ENCODE measurements at regions of chr9 and their contacts with region 1.

Region 1: DNA sequence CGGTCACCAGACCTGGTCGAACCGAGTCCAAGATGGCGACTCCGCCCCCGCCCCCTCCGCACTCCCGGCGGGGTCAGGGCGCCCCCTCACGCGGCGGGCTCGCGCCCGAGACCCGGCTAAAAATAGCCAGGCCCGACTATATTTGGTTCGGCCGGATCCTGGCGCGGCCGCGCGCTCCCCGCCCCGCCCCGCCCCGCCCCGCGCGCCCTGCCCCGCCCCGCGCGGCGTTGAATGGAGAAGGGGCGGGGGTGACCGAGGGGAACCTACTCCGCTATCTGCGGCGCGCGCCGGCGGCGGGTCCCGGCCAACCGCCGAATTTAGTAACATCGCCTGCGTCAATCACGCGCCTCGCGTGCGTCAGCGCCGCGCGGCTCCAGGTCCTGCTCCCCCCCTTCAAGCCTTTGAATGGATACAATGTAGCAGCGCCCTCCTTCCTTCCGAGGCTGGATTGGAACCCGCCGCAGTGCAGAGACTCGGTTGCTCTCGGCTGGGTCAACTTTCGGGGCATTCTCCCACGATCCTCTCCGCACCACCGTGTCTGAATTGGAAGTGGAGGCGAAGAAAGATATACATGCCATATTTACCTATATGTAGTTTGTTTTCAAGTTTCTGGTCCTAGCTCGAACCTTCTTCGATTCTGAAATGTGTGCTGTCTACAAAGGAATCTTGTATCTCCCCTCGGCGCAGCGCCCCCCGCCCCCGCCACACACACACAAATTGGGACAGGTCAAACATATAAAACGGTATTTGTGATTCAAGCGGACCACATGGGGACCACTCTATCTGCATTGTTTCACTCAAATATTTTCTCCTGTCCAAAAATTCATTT is 1.6 kb upstream of the NR4A3 start:
- DNase-seq: peak in 2 of 4 experiments; percentile 94 to 98
- ATAC-seq: peak; percentile 74
- H3K4me3 ChIP-seq: peak overlapping the region; percentile 84
- H3K27ac ChIP-seq: peak overlapping the region; percentile 96
- H3K4me1 ChIP-seq: peaks cover 12 to 42% of the 10 kb centered on the region in 2 experiments
- H3K27me3 ChIP-seq: peaks cover 21 to 30% of the 10 kb centered on the region in 2 experiments
- CTCF ChIP-seq: peak in 2 of 3 experiments; percentile 33 to 45; a peak in 4 of 6 replicates
- EP300 ChIP-seq: no peak; the same call in 1 of the 2 replicates
- POLR2A ChIP-seq: no peak; the same call in none of the 2 replicates
- RAD21 ChIP-seq: peak in 1 of 2 experiments; percentile 29; a peak in 2 of 4 replicates

Region 2: DNA sequence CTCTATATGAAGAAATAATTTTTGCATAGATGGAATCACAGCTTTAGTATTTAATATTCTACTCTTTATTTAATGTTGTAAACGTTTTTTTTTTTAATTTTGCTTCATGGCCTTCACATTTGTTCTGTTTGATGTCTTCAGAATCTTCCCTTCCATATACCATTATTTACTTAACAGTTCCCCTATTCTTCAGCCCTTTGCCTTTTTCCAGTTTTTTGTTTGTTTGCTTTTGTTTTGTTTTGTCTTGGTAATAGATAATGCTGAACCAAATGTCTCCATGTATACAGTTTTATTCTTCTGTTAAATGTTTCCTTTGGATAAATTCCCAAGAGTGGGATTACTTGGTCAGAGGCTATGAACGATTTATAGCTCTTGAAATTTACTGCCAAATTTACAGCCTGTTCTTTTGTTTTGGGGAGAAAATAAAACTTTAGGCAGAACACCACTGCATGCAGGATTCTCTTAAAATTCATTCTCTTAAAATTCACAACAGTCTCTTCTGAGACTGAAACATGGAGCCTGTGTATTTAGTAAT is 40.1 kb after region 1 on chr9:
- CTCF ChIA-PET with region 1: no interaction called
- POLR2A ChIA-PET with region 1: interaction called, 3 read pairs
- in situ Hi-C with region 1: no loop called
- intact Hi-C with region 1: loop called (anchors 5 kb)
- DNase-seq: no peak
- ATAC-seq: no peak
- H3K4me3 ChIP-seq: no peak overlapping the region
- H3K27ac ChIP-seq: no peak overlapping the region
- H3K4me1 ChIP-seq: no peaks in the 10 kb centered on the region; a peak in 1 of 5 replicates
- H3K27me3 ChIP-seq: peaks cover 5 to 7% of the 10 kb centered on the region in 2 experiments; a peak in 3 of 5 replicates
- CTCF ChIP-seq: no peak
- EP300 ChIP-seq: no peak
- POLR2A ChIP-seq: no peak
- RAD21 ChIP-seq: no peak

Region 3: GRCh38 chr9:99980598-99980997 is 160.5 kb after region 1 on chr9:
- CTCF ChIA-PET with region 1: no interaction called
- POLR2A ChIA-PET with region 1: no interaction called
- in situ Hi-C with region 1: no loop called
- intact Hi-C with region 1: loop called (anchors 10 kb)
- DNase-seq: no peak
- ATAC-seq: peak; percentile 56
- H3K4me3 ChIP-seq: no peak overlapping the region
- H3K27ac ChIP-seq: no peak overlapping the region
- H3K4me1 ChIP-seq: peaks cover 0 to 8% of the 10 kb centered on the region in 2 experiments; a peak in 1 of 5 replicates
- H3K27me3 ChIP-seq: no peaks in the 10 kb centered on the region
- CTCF ChIP-seq: no peak
- EP300 ChIP-seq: no peak
- POLR2A ChIP-seq: no peak
- RAD21 ChIP-seq: no peak

Region 4: GRCh38 chr9:100098887-100099721 is 279.0 kb after region 1 on chr9 and contains the starts of genes ERP44 and INVS:
- CTCF ChIA-PET with region 1: no interaction called
- POLR2A ChIA-PET with region 1: no interaction called
- in situ Hi-C with region 1: no loop called
- intact Hi-C with region 1: loop called (anchors 10 kb)
- DNase-seq: peak; percentile 85 to 99 (median 90)
- ATAC-seq: peak; percentile 96
- H3K4me3 ChIP-seq: peak within 1 kb of the TSS; percentile 83
- H3K27ac ChIP-seq: peak within 1 kb of the TSS; percentile 84
- H3K4me1 ChIP-seq: peaks cover 4 to 17% of the 10 kb centered on the region in 2 experiments; a peak in 2 of 5 replicates
- H3K27me3 ChIP-seq: no peaks in the 10 kb centered on the region
- CTCF ChIP-seq: no peak; a peak in 1 of 6 replicates
- EP300 ChIP-seq: no peak
- POLR2A ChIP-seq: peak; percentile 87
- RAD21 ChIP-seq: no peak
- polyA plus RNA-seq, gene ERP44: 10.8 to 11.2 TPM
- polyA plus RNA-seq, gene INVS: 0.77 to 0.91 TPM

Region 5: DNA sequence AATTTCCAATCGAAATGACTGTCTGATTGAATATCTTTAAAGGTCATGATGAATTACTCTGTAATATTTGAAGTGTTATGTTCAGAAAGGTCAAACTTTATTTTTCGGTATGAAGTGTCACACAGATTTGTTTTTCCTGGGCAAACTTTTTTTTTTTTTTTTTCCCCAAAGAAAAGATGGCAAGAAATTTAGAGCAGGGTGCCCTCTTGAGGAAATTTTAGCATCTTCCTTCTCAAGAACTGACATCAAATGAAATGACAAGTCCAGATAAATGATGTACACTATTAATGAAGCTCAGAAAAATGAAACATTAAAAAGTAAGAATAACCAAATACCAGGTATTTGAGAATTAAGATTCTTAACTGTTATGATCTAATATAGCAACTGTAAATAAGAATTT is 402.6 kb after region 1 on chr9:
- CTCF ChIA-PET with region 1: no interaction called
- POLR2A ChIA-PET with region 1: no interaction called
- in situ Hi-C with region 1: no loop called
- intact Hi-C with region 1: loop called (anchors 5 kb)
- DNase-seq: peak in 2 of 4 experiments; percentile 12 to 28
- ATAC-seq: no peak
- H3K4me3 ChIP-seq: no peak overlapping the region
- H3K27ac ChIP-seq: no peak overlapping the region
- H3K4me1 ChIP-seq: 0 out of 5 replicates have a peak, but pooled peaks cover 0 to 3% of the 10 kb centered on the region in 2 experiments
- H3K27me3 ChIP-seq: no peaks in the 10 kb centered on the region
- CTCF ChIP-seq: peak in 2 of 3 experiments; percentile 13 to 52; a peak in 3 of 6 replicates
- EP300 ChIP-seq: no peak
- POLR2A ChIP-seq: no peak
- RAD21 ChIP-seq: peak; percentile 22 to 48

Measured in K562 (cell line).